Dorsolateral prefrontal cortex (tissue), 120 donors: ENCODE measurements at regions of chr18 and their contacts with region 1.

Region 1: GRCh38 chr18:58863539-58864145 is 1.0 kb upstream of the ZNF532 start:
- DNase-seq: peak in 8 of 10 donors; percentile 42 to 66 (median 52)
- H3K4me3 ChIP-seq: peak overlapping the region; percentile 45 to 78 (median 65)
- H3K27ac ChIP-seq: peak overlapping the region; percentile 88 to 100 (median 99)
- H3K27me3 ChIP-seq: no peaks in the 10 kb centered on the region
- CTCF ChIP-seq: no peak

Region 2: DNA sequence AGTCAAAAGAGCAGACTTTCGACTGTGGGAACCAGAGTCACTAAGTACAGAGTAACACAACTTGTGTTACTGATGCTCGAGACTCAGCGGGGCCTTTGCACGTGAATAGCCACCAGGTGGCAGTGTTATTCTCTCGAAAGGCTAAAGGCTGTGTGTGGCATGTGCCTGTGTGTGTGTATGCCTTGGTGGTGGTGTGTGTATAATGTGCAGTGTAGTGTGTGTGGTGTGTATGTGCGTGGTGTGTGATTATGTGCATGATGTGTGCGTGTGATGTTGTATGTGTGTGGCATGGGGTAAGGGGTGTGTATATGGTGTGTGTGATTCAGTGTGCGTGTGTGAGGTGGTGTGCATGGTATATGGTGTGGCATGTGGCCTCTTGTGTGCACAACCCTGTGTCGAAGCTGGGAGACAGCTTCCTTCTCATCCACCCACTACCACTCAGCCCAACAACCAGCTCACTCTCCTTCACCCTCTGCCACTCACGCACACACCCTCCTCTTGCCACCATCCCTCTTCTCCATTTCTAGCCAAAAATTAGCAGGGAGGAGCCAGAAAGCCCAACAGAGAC is 81.9 kb before region 1 on chr18:
- intact Hi-C with region 1: loop called (anchors 2 to 5 kb)
- DNase-seq: peak; percentile 75 to 96 (median 86)
- H3K4me3 ChIP-seq: no peak overlapping the region
- H3K27ac ChIP-seq: peak overlapping the region in 3 of 59 donors; percentile 8 to 31 (median 18)
- H3K27me3 ChIP-seq: no peaks in the 10 kb centered on the region
- CTCF ChIP-seq: peak; percentile 86 to 99 (median 97)

Region 3: DNA sequence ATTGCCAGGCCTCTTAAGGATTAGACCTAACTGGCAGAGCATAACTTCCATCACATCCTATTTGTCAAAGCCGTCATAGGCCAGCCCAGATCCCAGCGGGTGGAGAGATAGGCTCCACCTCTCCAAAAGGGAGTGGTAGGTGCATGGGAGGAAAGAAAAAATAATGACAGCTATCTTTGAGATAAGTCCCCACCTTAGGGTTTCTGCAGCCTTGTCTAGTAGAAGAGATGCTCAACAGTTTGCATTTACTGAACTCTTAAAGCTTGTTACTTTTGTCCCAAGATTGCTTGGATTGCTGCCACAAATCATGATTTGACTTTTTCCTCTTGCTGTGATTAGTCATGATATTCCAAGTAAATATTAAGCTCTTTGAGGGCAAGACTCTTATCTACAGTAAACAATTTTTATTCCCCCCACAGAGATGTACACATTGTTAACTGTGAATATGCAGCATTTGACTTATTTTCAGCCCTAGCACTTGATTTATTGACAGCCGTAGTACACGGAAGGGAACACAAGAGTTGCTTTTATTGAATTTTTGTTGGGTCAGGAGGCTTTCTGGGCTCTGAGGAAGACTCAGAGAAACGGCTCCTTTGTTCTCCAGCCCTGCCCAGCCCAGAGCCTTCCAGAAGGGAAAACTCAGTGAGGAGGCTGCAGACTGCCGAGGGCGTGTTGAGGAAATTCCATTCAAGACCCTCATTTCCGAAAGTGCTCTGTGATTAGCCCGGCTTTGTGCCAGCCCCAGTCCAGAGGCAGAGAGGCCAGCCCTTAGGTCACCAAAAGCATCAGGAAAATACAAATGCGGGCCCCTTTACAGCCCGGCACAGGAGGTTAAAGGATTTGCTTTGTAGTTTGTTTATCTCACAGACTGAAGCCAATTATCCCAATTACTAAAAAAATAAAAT is 74.4 kb before region 1 on chr18:
- intact Hi-C with region 1: loop called (anchors 2 to 5 kb)
- DNase-seq: peak in 6 of 10 donors; percentile 39 to 68 (median 52)
- H3K4me3 ChIP-seq: peak overlapping the region in 1 of 59 donors; percentile 3
- H3K27ac ChIP-seq: peak overlapping the region; percentile 33 to 95 (median 81)
- H3K27me3 ChIP-seq: no peaks in the 10 kb centered on the region
- CTCF ChIP-seq: peak in 2 of 56 donors; percentile 11 to 23

Region 4: DNA sequence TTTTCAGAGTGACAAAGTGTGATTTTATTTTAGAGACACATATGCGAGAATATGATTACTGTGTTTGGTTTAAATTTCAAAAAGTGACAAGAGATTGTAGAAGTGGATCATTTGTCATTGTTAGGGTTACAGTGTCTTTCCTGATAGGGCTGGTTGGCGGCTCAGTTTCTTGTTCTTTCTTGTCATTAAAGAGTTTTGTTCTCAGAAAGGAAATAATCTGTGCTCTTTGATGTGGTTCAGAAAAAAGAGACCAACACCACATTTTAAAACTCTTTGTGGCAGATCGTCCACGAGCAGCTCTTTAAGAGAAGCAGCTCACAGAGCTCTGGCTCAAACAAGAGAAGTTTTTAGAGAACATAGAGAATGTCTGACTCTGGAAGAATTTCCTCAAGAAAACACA is 44.6 kb before region 1 on chr18:
- intact Hi-C with region 1: loop called in 1 of 2 experiments (anchors 10 kb)
- DNase-seq: no peak
- H3K4me3 ChIP-seq: no peak overlapping the region
- H3K27ac ChIP-seq: peak overlapping the region in 1 of 59 donors; percentile 4
- H3K27me3 ChIP-seq: no peaks in the 10 kb centered on the region
- CTCF ChIP-seq: no peak

Region 5: GRCh38 chr18:58887613-58887963 is 23.9 kb after region 1 on chr18:
- intact Hi-C with region 1: loop called in 1 of 2 experiments (anchors 2 kb)
- DNase-seq: peak in 5 of 10 donors; percentile 39 to 66 (median 41)
- H3K4me3 ChIP-seq: peak overlapping the region in 33 of 59 donors; percentile 1 to 46 (median 25)
- H3K27ac ChIP-seq: peak overlapping the region; percentile 30 to 91 (median 83)
- H3K27me3 ChIP-seq: no peaks in the 10 kb centered on the region
- CTCF ChIP-seq: no peak

Region 6: GRCh38 chr18:58937071-58937886 is 73.6 kb after region 1 on chr18:
- intact Hi-C with region 1: no loop called
- DNase-seq: no peak
- H3K4me3 ChIP-seq: peak overlapping the region in 2 of 59 donors; percentile 5 to 10
- H3K27ac ChIP-seq: peak overlapping the region in 50 of 59 donors; percentile 2 to 80 (median 57)
- H3K27me3 ChIP-seq: no peaks in the 10 kb centered on the region
- CTCF ChIP-seq: no peak

Region 7: GRCh38 chr18:59029663-59030429 is 166.2 kb after region 1 on chr18:
- intact Hi-C with region 1: loop called in 1 of 2 experiments (anchors 2 kb)
- DNase-seq: peak in 5 of 10 donors; percentile 31 to 65 (median 61)
- H3K4me3 ChIP-seq: peak overlapping the region in 38 of 59 donors; percentile 0 to 57 (median 22)
- H3K27ac ChIP-seq: peak overlapping the region in 58 of 59 donors; percentile 19 to 96 (median 87)
- H3K27me3 ChIP-seq: no peaks in the 10 kb centered on the region
- CTCF ChIP-seq: peak in 2 of 56 donors; percentile 3 to 11

Region 8: DNA sequence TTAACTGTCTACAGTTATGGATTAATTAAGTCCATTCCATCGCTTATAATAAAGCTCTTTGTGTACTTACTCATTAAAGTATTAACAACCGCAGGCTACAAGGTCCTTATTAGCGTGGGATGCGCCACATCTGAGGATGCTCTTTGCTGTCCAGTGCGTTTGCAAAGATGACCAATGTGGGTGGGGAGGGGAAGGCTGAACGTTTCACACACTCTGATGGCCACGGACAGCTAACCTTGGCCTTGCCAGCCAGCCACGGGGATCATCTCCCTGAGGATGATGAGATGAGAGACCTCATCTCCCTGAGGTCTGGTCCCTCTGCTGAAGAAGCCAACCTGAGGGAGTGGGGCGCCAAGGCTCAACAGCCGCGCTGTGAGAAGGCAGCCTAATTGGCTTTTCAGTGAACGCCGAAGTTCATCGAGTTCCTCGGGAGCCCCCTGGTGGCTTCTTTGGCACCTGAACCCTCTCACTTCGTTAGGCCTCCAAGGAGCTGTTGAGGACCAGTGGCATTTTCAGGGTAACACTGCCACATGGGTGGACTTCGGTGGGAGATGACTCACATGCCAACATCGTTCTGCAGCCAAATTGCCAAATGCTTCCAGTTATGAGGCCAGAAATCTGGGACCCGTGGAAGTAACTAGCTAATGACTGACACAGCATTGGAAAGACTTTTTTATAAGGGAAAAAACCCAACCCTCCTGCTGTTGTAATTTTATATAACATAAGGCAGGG is 206.7 kb after region 1 on chr18:
- intact Hi-C with region 1: loop called in 1 of 2 experiments (anchors 10 kb)
- DNase-seq: peak; percentile 86 to 94 (median 90)
- H3K4me3 ChIP-seq: peak overlapping the region in 8 of 59 donors; percentile 4 to 46 (median 26)
- H3K27ac ChIP-seq: peak overlapping the region in 2 of 59 donors; percentile 22 to 50
- H3K27me3 ChIP-seq: no peaks in the 10 kb centered on the region
- CTCF ChIP-seq: peak; percentile 58 to 98 (median 92)